SK-N-SH (cell line): ENCODE measurements at regions of chr16 and their contacts with region 1.

Region 1: GRCh38 chr16:24036614-24037013 is 200.8 kb downstream of the PRKCB start:
- DNase-seq: peak; percentile 79
- H3K4me3 ChIP-seq: no peak overlapping the region; a peak in 1 of 4 replicates
- H3K27ac ChIP-seq: no peak overlapping the region
- H3K4me1 ChIP-seq: no peaks in the 10 kb centered on the region
- H3K27me3 ChIP-seq: no peaks in the 10 kb centered on the region
- CTCF ChIP-seq: peak; percentile 66
- EP300 ChIP-seq: no peak
- RAD21 ChIP-seq: peak; percentile 94

Region 2: GRCh38 chr16:23796941-23797340 is 239.7 kb before region 1 on chr16:
- CTCF ChIA-PET with region 1: interaction called, 36 read pairs
- POLR2A ChIA-PET with region 1: no interaction called
- DNase-seq: no peak
- H3K4me3 ChIP-seq: no peak overlapping the region
- H3K27ac ChIP-seq: no peak overlapping the region
- H3K4me1 ChIP-seq: no peaks in the 10 kb centered on the region
- H3K27me3 ChIP-seq: no peaks in the 10 kb centered on the region; the same call in 1 of the 2 replicates
- CTCF ChIP-seq: no peak
- EP300 ChIP-seq: no peak
- RAD21 ChIP-seq: no peak

Region 3: DNA sequence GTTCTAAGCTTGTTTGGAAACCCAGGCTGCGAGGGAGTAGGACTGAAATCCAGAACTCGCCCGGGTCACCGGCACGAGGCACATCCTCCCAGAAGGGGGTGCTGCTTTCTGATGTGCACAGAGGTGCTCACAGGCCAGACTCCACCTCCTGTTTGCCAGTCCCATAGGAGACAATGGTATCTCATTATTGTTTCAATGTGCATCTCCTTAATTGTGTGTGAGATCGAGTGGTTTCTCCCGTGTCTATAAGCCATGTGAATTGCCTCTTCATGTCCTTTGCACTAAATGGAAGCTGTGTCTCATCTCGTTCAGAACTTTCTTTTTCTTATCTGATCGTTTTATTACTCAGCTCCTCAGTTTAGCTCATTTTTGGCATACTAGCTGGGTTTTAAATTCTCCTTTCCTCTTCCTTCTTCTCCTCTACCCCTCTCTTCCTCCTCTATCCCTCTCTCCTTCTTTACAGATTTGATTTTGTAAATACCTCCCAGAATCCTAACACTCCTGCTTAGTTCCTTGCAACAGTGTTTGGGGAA is 233.0 kb before region 1 on chr16:
- CTCF ChIA-PET with region 1: interaction called, 36 read pairs
- POLR2A ChIA-PET with region 1: interaction called, 5 read pairs
- DNase-seq: peak; percentile 66
- H3K4me3 ChIP-seq: peak overlapping the region in 1 of 2 experiments; percentile 1; a peak in 1 of 4 replicates
- H3K27ac ChIP-seq: no peak overlapping the region
- H3K4me1 ChIP-seq: peaks cover 0 to 5% of the 10 kb centered on the region in 2 experiments; a peak in 1 of 4 replicates
- H3K27me3 ChIP-seq: no peaks in the 10 kb centered on the region; the same call in 1 of the 2 replicates
- CTCF ChIP-seq: peak; percentile 55
- EP300 ChIP-seq: no peak
- RAD21 ChIP-seq: peak; percentile 59

Region 4: DNA sequence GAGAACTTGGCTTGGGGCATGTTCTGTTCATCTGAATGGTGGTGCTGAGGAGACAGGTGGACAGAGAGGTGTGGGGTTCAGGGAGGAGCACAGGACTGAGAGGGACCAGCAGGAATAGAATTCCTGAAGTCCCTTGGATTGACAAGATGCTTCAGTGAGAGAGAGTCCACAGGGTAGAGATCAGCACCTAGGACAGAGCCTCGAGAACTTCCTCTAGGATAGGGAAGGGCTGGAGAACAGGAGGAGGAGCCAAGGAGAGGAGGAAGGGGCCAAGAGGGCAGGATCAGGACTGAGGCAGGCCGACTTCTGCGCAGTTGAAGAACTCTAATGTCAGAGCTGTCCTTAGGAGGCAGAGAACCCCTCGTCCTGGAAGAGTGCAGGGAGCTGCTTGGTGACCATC is 62.4 kb before region 1 on chr16:
- CTCF ChIA-PET with region 1: no interaction called
- POLR2A ChIA-PET with region 1: no interaction called
- DNase-seq: no peak
- H3K4me3 ChIP-seq: no peak overlapping the region
- H3K27ac ChIP-seq: no peak overlapping the region
- H3K4me1 ChIP-seq: no peaks in the 10 kb centered on the region
- H3K27me3 ChIP-seq: no peaks in the 10 kb centered on the region
- CTCF ChIP-seq: no peak
- EP300 ChIP-seq: no peak
- RAD21 ChIP-seq: no peak

Region 5: GRCh38 chr16:24023621-24024020 is 13.0 kb before region 1 on chr16:
- CTCF ChIA-PET with region 1: interaction called, 16 read pairs
- POLR2A ChIA-PET with region 1: no interaction called
- DNase-seq: no peak
- H3K4me3 ChIP-seq: no peak overlapping the region
- H3K27ac ChIP-seq: no peak overlapping the region
- H3K4me1 ChIP-seq: no peaks in the 10 kb centered on the region
- H3K27me3 ChIP-seq: no peaks in the 10 kb centered on the region
- CTCF ChIP-seq: no peak
- EP300 ChIP-seq: no peak
- RAD21 ChIP-seq: no peak

Region 6: DNA sequence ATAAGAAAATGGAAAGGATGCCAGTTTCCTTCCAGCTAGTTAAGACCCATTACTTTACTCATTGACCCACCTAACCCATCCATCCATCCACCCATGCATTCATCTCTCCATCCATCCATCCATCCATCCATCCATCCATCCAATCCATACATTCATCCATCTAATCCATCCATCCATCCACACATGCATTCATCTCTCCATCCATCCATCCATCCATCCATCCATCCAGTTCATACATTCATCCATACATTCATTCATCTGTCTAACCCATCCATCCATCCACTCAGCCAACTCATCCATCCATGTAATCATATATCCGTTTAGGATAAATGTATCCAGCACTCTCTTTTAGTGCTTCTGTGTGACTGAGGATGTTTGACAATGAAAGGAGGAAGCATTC is 40.7 kb after region 1 on chr16:
- CTCF ChIA-PET with region 1: no interaction called
- POLR2A ChIA-PET with region 1: no interaction called
- DNase-seq: no peak
- H3K4me3 ChIP-seq: no peak overlapping the region
- H3K27ac ChIP-seq: no peak overlapping the region
- H3K4me1 ChIP-seq: peaks cover 0 to 6% of the 10 kb centered on the region in 2 experiments; a peak in 2 of 4 replicates
- H3K27me3 ChIP-seq: no peaks in the 10 kb centered on the region
- CTCF ChIP-seq: no peak
- EP300 ChIP-seq: no peak
- RAD21 ChIP-seq: no peak

Region 7: GRCh38 chr16:24504472-24505345 is 468.1 kb after region 1 on chr16:
- CTCF ChIA-PET with region 1: interaction called, 172 read pairs
- POLR2A ChIA-PET with region 1: no interaction called
- DNase-seq: peak; percentile 64
- H3K4me3 ChIP-seq: peak overlapping the region in 1 of 2 experiments; percentile 49; a peak in 1 of 4 replicates
- H3K27ac ChIP-seq: no peak overlapping the region
- H3K4me1 ChIP-seq: peaks cover 0 to 4% of the 10 kb centered on the region in 2 experiments; a peak in 1 of 4 replicates
- H3K27me3 ChIP-seq: no peaks in the 10 kb centered on the region
- CTCF ChIP-seq: peak; percentile 80
- EP300 ChIP-seq: no peak
- RAD21 ChIP-seq: peak; percentile 91